ENCODE measurements at regions of chr4 and their contacts with region 1.

Region 1: DNA sequence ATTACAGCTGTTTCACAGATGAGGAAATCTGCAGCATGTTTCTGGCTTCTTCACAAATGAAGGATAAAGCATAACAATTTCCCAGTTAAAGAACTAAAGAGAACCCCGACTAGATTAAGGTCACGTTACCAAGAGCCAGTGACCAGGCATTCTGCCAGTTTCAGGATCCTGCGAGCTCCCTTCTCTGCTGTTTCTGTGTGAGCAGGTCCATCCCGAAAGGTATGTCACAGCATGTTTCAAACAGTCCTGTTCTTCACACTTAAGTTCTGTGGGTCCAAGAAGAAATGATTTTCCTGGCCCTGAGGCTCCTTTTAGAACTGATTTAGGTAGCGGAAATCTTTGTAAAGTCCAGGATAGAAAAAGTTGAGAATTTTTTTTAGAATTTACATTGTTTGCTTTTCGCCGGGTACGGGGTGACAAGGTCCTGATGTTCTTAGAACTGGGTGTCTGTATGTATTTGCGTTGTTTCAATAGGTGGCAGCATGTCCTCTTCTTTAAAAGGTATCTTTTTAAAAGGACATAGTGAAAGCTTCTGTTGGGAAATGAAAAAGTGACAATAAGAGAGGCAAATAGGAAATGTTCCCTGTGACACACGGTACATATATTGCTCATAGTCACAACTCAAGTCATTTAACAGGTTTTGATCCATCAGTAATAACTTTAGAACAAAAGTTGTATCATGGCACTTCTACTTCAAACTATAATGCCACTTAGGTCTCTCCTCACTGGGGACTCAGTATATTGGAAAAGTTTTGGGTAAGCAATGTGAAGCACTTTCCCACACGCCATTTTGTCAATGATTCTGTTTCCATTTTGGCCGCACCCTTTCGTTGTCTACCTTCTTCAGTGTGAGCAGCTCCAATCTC is 18.4 kb downstream of the IL21 start:
- DNase-seq: peak; percentile 8
- H3K4me3 ChIP-seq: peak overlapping the region; percentile 18 to 24; a peak in 2 of 4 replicates
- H3K27ac ChIP-seq: no peak overlapping the region
- H3K4me1 ChIP-seq: no peaks in the 10 kb centered on the region; a peak in 1 of 4 replicates
- H3K27me3 ChIP-seq: no peaks in the 10 kb centered on the region
- CTCF ChIP-seq: peak; percentile 68
- EP300 ChIP-seq: no peak
- RAD21 ChIP-seq: peak; percentile 69

Region 2: DNA sequence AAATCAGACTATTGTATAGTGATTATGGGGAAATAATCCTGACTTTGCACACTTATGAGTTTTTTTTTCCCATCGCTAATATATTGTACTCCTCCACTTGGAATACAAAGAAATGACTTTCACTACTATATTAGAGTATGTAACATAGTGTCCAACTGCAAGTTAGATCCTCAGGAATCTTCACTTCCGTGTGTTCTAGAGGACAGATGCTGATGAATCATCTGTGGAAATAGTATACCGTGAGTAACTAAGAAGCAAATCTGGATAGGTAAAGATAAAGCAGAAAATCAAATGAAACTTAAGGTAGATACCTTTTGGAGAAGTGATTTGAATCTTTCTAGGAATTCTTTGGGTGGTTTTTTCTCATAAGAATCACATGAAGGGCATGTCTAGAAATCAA is 10.0 kb after region 1 on chr4:
- CTCF ChIA-PET with region 1: interaction called, 12 read pairs
- POLR2A ChIA-PET with region 1: no interaction called
- DNase-seq: no peak
- H3K4me3 ChIP-seq: no peak overlapping the region
- H3K27ac ChIP-seq: no peak overlapping the region
- H3K4me1 ChIP-seq: no peaks in the 10 kb centered on the region
- H3K27me3 ChIP-seq: no peaks in the 10 kb centered on the region
- CTCF ChIP-seq: no peak
- EP300 ChIP-seq: no peak
- RAD21 ChIP-seq: no peak

Region 3: DNA sequence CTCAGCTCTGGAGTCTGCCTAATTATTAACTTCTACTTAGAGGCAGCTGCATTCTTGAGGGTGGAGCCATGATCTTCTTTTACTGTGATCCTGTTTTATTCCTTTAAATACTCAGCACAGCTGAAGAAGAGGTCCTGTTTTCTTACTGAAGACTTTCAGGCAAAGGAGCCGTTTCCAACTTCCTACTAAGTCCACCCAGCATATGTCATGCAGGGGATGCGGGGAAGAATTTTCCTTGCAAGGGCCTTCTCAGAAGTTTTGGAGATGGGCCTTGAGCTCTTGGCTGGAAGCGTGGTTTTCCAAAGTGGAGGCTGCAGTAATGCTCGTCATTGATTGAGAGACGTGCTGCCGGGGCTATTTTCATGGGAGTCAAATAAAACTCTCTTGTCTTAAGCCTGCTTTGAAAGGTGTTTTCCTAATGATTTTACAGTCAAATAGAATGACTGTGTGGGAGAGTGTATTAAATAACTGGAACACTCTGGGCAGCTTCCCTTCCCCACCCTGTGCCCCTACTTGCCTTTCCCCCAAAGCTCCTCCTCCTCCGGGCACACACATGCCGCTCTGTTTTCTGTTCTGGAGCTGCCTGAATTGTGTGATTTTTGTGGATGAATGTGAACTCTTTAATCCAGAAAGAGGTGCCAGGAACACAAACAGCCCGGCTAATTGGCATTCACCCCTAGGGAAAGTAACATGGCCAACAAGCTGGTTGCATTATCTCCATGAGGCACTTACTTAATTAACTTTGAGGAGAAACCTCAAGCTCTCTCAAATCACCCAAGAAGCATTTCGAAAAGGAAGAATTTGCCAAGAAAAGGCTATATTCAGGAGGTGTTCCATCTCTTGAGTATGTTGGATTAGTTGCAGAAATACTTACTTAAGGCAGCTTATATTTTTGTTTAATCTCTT is 252.2 kb after region 1 on chr4:
- CTCF ChIA-PET with region 1: no interaction called
- POLR2A ChIA-PET with region 1: no interaction called
- DNase-seq: no peak
- H3K4me3 ChIP-seq: no peak overlapping the region
- H3K27ac ChIP-seq: no peak overlapping the region
- H3K4me1 ChIP-seq: peaks cover 4 to 10% of the 10 kb centered on the region in 2 experiments; a peak in 3 of 4 replicates
- H3K27me3 ChIP-seq: no peaks in the 10 kb centered on the region
- CTCF ChIP-seq: no peak
- EP300 ChIP-seq: no peak
- RAD21 ChIP-seq: no peak

Region 4: DNA sequence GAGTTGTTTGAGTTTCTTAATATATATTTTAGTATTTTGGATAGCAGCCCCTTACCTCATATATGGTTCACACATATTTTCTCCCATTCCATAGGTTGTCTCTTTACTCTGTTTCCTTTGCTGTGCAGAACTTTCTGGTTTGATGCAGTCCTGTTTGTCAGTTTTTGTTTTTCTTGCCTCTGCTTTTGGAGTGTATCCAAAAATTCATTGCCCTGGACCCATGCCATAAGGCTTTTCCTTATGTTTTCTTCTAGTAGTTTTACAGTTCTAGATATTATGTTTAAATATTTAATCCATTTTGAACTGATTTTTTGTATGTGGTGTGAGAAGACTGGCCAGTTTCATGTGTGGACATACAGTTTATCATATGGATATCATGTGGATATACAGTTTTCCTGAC is 378.4 kb after region 1 on chr4:
- CTCF ChIA-PET with region 1: no interaction called
- POLR2A ChIA-PET with region 1: no interaction called
- DNase-seq: no peak
- H3K4me3 ChIP-seq: no peak overlapping the region
- H3K27ac ChIP-seq: no peak overlapping the region
- H3K4me1 ChIP-seq: no peaks in the 10 kb centered on the region
- H3K27me3 ChIP-seq: no peaks in the 10 kb centered on the region
- CTCF ChIP-seq: no peak
- EP300 ChIP-seq: no peak
- RAD21 ChIP-seq: no peak